Posterior cingulate gyrus (tissue), 11 donors: ENCODE measurements at regions of chr17 and their contacts with region 1.

Region 1: GRCh38 chr17:38351412-38352222 is at the start of gene SOCS7:
- DNase-seq: peak; percentile 87 to 99 (median 94)

Region 2: DNA sequence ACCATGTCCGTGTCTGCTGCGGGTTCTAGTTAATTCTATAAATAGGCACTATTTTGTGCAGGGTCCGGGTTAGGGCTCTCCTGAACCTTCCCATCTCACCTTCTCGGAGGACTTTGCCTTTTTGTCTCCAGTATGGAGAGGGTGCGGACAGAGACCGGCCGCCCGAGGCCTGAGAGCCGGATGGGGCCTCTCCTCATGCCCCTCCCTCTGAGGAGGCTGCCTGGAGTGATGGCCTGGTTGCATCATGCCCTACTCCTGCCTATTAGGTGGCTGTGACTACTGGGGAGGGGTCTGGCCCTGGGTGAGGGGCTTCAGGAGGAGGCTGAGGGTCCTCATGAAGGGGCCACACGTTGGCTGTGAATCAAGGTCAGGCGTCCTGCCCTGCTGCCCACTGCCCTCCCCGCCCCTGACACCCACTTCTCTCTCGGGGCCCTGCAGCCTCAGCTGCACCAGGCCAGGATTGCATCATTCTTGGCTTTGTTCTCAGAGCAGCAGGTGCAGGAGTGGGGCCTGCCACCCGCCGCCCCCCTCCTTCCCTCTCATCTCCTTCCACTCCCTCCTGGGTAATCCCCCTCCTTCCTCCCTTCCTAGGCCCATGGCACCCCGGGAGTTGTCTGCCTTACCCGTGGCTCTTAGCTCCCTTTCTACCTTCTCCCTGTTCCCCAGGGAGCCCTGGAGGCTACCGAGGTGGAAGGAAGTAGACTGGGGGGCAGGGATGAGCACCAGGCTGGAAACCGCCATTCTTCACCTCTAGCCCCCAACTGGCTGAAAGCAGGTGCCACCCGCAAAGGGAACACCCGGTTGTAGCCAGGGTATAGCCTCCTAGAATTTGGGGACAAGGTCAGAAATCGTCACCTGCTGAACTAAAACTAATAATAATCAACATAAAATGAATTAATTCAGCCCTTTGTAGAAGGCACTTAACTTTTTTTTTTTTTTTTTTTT is 63.9 kb after region 1 on chr17:
- intact Hi-C with region 1: loop called (anchors 1 kb)
- DNase-seq: peak in 5 of 10 donors; percentile 43 to 90 (median 79)